CD14-positive monocyte (primary cell): ENCODE measurements at regions of chr10 and their contacts with region 1.

Region 1: DNA sequence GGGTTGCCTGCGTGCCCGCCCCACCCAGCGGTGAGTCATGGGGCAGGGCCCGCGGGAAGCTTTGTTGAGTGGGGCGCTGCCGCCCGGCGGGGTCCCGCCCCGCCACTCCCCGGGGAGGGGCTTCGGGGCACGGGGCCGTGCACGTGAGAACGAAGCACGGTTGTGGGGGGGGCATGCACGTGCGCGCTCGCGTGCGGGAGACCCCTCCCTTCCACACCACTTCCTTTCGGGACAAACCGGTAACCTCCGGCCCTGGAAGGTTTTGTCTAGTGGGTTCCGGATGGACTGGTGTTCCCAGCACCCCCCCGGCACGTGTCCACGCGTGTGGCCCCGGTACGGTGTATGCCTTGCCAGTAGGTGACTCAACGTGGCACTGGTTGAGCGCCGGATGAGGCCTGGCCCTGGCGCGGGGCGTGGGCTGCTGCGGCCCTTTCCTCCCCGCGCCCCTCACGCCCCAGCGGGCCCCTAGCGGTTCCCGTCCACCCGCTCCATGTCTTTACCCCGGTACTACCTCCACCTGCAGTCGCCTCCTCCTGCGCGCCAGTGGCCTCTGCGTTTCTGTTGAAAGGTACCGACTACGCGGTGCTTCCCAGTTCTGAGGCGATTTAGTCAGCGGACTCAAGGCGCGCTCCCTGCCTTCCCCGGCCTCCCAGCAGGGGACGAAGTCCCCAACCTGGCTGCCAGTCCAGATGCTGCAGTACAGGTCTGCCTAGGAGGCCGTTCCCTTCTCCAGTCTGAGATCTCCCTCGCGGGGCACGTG is 3.1 kb downstream of the ADIRF start:
- DNase-seq: peak; percentile 88 to 95 (median 91)
- H3K4me3 ChIP-seq: peak overlapping the region; percentile 29 to 77 (median 74)
- H3K4me3 Mint-ChIP-seq: peak overlapping the region; percentile 77 to 96
- H3K27ac ChIP-seq: peak overlapping the region; percentile 67 to 94
- H3K27ac Mint-ChIP-seq: peak overlapping the region; percentile 73 to 94 (median 89)
- H3K4me1 ChIP-seq: peaks cover 32 to 42% of the 10 kb centered on the region in 2 donors
- H3K4me1 Mint-ChIP-seq: peaks cover 28% of the 10 kb centered on the region
- H3K27me3 ChIP-seq: peaks cover 19 to 49% of the 10 kb centered on the region in 2 donors
- H3K27me3 Mint-ChIP-seq: peaks cover 45 to 65% (median 59%) of the 10 kb centered on the region in 3 donors
- CTCF ChIP-seq: no peak

Region 2: GRCh38 chr10:87094373-87095235 is 123.2 kb after region 1 on chr10 and contains the starts of genes GLUD1 and SHLD2:
- intact Hi-C with region 1: loop called (anchors 5 to 10 kb)
- DNase-seq: peak; percentile 81 to 92 (median 88)
- H3K4me3 ChIP-seq: peak within 1 kb of the TSS; percentile 61 to 87 (median 75)
- H3K4me3 Mint-ChIP-seq: peak within 1 kb of the TSS; percentile 88 to 90
- H3K27ac ChIP-seq: peak within 1 kb of the TSS; percentile 90 to 94
- H3K27ac Mint-ChIP-seq: peak within 1 kb of the TSS; percentile 88 to 98 (median 97)
- H3K4me1 ChIP-seq: peaks cover 38 to 48% of the 10 kb centered on the region in 2 donors
- H3K4me1 Mint-ChIP-seq: peaks cover 39% of the 10 kb centered on the region
- H3K27me3 ChIP-seq: no peaks in the 10 kb centered on the region
- H3K27me3 Mint-ChIP-seq: no peaks in the 10 kb centered on the region
- CTCF ChIP-seq: no peak
- polyA plus RNA-seq, gene GLUD1: 63.6 to 175 (median 163) TPM
- polyA plus RNA-seq, gene SHLD2: 10.2 to 16.3 (median 16.2) TPM